ENCODE measurements at regions of chr12 and their contacts with region 1.

Region 1: DNA sequence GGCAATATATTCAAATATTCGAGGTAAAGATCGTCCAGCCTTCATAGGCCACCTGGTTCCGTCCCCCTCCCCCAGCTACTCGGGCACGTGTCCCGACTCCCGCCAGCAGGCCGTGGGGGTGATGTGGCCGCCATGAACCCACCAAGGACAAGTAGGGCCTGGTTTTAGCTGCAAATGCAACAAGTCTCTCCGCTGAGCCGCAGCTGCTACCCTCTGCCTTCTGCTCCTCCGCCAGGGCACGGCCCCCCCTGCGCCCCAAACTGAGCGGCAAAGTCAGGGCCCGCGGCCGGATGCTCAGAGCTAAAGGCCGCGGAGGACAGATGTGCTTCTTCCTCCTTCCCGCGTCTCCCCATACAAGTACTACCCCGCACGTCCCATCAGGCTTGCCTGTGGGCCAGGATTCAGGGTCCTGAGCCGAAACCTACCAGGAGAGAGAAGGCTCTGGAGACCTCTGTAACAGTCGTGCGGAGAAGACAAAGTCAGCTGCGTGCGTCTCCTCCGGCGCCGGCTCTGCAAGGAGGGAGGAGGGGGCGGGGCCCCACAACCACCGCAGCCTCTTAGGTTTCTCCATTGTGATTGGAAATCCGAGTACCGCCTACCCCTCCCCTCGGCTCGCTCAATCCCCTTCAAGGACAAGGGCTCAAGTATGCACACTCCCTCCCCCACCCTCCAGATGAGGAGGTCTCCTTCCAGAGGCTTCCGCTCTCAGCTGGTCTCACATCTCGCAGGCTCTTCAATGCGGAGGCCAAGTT is at the start of gene LDHB:
- DNase-seq: peak; percentile 97
- ATAC-seq: peak; percentile 97
- H3K4me3 Mint-ChIP-seq: peak within 1 kb of the TSS; percentile 81
- H3K27ac Mint-ChIP-seq: peak within 1 kb of the TSS; percentile 99
- H3K4me1 Mint-ChIP-seq: peaks cover 45% of the 10 kb centered on the region
- H3K27me3 Mint-ChIP-seq: no peaks in the 10 kb centered on the region
- total RNA-seq, gene LDHB: 918 to 1,852 TPM

Region 2: DNA sequence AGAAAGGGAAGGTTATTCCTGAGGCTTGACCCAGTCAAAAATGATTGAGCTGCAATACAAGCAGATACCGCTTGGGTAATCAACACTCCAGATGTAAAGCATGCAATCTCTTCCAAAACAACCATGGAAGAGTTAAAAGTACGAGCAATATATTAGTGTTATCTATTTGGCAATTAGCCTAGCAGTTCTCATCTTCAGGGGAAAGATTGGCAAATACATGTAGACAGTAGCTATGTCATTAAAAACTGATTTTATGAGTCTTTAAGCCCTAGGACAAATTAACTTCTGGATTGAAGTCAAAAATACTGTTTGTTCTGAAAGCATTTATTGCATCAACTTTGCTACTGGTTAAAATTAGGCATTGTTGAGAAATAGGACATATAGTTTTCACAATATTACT is 43.6 kb before region 1 on chr12:
- CTCF ChIA-PET with region 1: no interaction called
- POLR2A ChIA-PET with region 1: interaction called, 3 read pairs
- intact Hi-C with region 1: loop called (anchors 1 to 2 kb)
- DNase-seq: no peak
- ATAC-seq: no peak
- H3K4me3 Mint-ChIP-seq: no peak overlapping the region
- H3K27ac Mint-ChIP-seq: no peak overlapping the region
- H3K4me1 Mint-ChIP-seq: peaks cover 59% of the 10 kb centered on the region
- H3K27me3 Mint-ChIP-seq: no peaks in the 10 kb centered on the region

Region 3: GRCh38 chr12:21731144-21731543 is 73.6 kb after region 1 on chr12:
- CTCF ChIA-PET with region 1: no interaction called
- POLR2A ChIA-PET with region 1: no interaction called
- intact Hi-C with region 1: no loop called
- DNase-seq: no peak
- ATAC-seq: no peak
- H3K4me3 Mint-ChIP-seq: no peak overlapping the region
- H3K27ac Mint-ChIP-seq: no peak overlapping the region
- H3K4me1 Mint-ChIP-seq: no peaks in the 10 kb centered on the region
- H3K27me3 Mint-ChIP-seq: peaks cover 11% of the 10 kb centered on the region

Region 4: GRCh38 chr12:21894792-21895595 is 237.5 kb after region 1 on chr12:
- CTCF ChIA-PET with region 1: no interaction called
- POLR2A ChIA-PET with region 1: no interaction called
- intact Hi-C with region 1: no loop called
- DNase-seq: no peak
- ATAC-seq: no peak
- H3K4me3 Mint-ChIP-seq: no peak overlapping the region
- H3K27ac Mint-ChIP-seq: no peak overlapping the region
- H3K4me1 Mint-ChIP-seq: no peaks in the 10 kb centered on the region
- H3K27me3 Mint-ChIP-seq: peaks cover 6% of the 10 kb centered on the region